Activated B cell treated with CpG ODN at 0.5 μM for 24 hours (primary cell): ENCODE measurements at regions of chr13 and their contacts with region 1.

Region 1: DNA sequence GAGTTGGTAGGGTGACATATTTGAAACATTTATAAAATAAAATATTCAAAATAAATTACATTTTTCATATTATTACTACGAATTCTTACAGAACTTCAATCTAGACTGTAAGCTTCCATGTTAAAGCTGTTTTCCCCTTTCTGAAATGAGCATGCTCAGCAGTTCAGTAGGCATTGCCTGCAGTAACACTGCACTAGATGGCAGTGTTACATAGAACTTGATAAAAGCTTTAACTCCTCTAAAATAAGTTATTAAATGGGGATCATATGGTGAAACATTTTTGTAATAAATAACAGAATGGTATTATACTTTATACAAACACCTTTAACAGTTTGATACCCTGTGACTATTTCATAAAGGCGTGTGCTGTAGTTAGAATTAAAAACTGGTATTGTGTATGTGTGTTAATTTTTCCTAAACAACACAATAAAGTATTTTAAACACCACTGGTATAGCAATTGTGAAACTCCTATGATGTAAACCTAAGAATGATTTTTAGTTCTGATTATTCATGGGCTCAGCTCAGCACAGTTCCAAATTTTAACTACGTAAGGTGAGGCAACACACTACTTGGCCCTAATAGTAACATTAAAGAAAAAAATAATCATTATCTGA is 11.6 kb upstream of the GPR18 start:
- DNase-seq: no peak
- ATAC-seq: peak; percentile 70
- H3K4me3 Mint-ChIP-seq: no peak overlapping the region
- H3K27ac Mint-ChIP-seq: peak overlapping the region; percentile 74
- H3K4me1 Mint-ChIP-seq: peaks cover 65% of the 10 kb centered on the region
- H3K27me3 Mint-ChIP-seq: no peaks in the 10 kb centered on the region
- CTCF ChIP-seq: peak; percentile 48

Region 2: GRCh38 chr13:99182439-99182838 is 87.3 kb before region 1 on chr13:
- CTCF ChIA-PET with region 1: interaction called, 370 read pairs
- POLR2A ChIA-PET with region 1: interaction called, 19 read pairs
- intact Hi-C with region 1: no loop called
- DNase-seq: no peak
- ATAC-seq: no peak
- H3K4me3 Mint-ChIP-seq: no peak overlapping the region
- H3K27ac Mint-ChIP-seq: no peak overlapping the region
- H3K4me1 Mint-ChIP-seq: peaks cover 35% of the 10 kb centered on the region
- H3K27me3 Mint-ChIP-seq: no peaks in the 10 kb centered on the region
- CTCF ChIP-seq: no peak

Region 3: GRCh38 chr13:99288089-99288488 is 18.4 kb after region 1 on chr13:
- CTCF ChIA-PET with region 1: interaction called, 37 read pairs
- POLR2A ChIA-PET with region 1: interaction called, 31 read pairs
- intact Hi-C with region 1: no loop called
- DNase-seq: no peak
- ATAC-seq: peak; percentile 85
- H3K4me3 Mint-ChIP-seq: peak overlapping the region; percentile 60
- H3K27ac Mint-ChIP-seq: peak overlapping the region; percentile 86
- H3K4me1 Mint-ChIP-seq: peaks cover 89% of the 10 kb centered on the region
- H3K27me3 Mint-ChIP-seq: no peaks in the 10 kb centered on the region
- CTCF ChIP-seq: no peak

Region 4: DNA sequence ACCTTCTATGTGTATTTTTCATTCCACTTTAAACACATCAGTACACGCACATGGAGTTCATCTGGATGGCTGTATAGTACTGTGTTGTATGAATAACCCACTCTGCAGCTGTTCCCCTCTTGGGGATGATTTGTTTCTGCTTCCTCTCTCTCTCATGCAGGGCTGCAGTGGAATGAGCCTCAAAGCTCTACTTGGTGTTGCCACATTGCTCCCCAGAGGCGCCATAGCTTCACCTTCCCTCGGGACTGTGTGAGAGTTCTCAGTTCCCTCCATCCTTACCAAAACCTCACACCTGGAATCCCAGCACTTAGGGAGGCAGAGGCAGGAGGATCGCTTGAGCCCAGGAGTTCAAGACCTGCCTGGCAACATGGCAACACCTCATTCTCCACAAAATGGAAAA is 65.9 kb after region 1 on chr13:
- CTCF ChIA-PET with region 1: interaction called, 14 read pairs
- POLR2A ChIA-PET with region 1: interaction called, 6 read pairs
- intact Hi-C with region 1: no loop called
- DNase-seq: peak; percentile 40
- ATAC-seq: peak; percentile 94
- H3K4me3 Mint-ChIP-seq: peak overlapping the region; percentile 29
- H3K27ac Mint-ChIP-seq: peak overlapping the region; percentile 77
- H3K4me1 Mint-ChIP-seq: peaks cover 56% of the 10 kb centered on the region
- H3K27me3 Mint-ChIP-seq: no peaks in the 10 kb centered on the region
- CTCF ChIP-seq: no peak

Region 5: DNA sequence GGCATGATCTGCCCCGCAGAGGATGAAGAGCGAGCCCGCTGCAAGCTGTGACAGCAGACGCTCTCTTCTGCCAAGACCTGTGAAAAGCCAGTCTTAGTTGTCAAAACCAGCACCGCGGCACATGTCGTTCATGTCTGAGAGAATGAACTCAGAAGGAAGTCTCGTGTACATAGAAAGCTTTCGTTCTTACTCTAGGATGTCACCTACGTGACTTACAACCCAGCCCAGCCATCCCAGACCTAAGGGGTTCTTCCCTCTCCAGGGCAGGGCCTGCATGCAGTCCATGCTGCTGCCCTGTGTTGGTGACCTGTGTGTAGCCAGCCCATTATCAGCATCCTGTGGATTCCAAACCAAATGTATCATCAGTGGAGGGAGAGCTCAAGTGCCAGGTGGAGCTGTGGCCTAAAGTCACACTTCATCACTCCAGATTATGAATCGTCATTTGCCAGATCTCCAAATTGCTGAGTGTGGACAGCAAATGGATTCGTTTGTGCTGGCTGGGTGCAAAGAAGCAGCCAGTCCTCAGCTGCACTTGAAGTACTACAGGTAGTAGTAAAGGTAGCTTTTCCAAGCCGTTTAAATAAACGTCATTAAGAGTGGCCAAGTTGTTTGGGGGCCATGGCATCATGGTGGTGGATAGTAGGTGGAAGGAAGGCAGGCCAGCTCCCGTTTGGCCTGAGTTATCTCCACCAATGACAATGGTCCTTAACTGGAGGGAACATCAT is 111.3 kb after region 1 on chr13:
- CTCF ChIA-PET with region 1: interaction called, 217 read pairs
- POLR2A ChIA-PET with region 1: interaction called, 44 read pairs
- intact Hi-C with region 1: no loop called
- DNase-seq: no peak
- ATAC-seq: peak; percentile 25
- H3K4me3 Mint-ChIP-seq: peak overlapping the region; percentile 25
- H3K27ac Mint-ChIP-seq: peak overlapping the region; percentile 63
- H3K4me1 Mint-ChIP-seq: peaks cover 81% of the 10 kb centered on the region
- H3K27me3 Mint-ChIP-seq: no peaks in the 10 kb centered on the region
- CTCF ChIP-seq: no peak

Region 6: DNA sequence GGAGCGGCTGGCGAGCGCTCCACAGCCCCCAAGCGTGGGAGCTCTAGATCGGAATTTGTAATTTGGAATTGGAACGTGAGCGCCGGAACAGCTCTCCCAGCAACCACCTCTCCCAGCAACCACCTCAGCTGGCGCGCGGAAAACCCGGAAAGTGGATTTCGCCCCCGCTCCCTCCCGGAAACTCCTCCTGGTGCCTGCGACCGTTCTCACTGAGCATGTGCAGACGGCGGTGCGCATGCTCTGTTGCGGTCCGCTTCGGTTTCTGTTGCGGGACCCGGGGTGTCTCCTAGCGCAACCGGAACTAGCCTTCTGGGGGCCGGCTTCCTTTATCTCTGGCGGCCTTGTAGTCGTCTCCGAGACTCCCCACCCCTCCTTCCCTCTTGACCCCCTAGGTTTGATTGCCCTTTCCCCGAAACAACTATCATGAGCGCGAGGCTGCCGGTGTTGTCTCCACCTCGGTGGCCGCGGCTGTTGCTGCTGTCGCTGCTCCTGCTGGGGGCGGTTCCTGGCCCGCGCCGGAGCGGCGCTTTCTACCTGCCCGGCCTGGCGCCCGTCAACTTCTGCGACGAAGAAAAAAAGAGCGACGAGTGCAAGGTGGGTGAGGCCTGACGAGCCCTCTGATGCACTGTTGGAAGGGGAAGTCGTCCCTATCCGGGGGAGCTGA is 231.6 kb after region 1 on chr13 and contains the start of gene TM9SF2:
- CTCF ChIA-PET with region 1: interaction called, 10 read pairs
- POLR2A ChIA-PET with region 1: no interaction called
- intact Hi-C with region 1: loop called (anchors 2 kb)
- DNase-seq: peak; percentile 98
- ATAC-seq: peak; percentile 61
- H3K4me3 Mint-ChIP-seq: peak within 1 kb of the TSS; percentile 97
- H3K27ac Mint-ChIP-seq: peak within 1 kb of the TSS; percentile 97
- H3K4me1 Mint-ChIP-seq: peaks cover 84% of the 10 kb centered on the region
- H3K27me3 Mint-ChIP-seq: no peaks in the 10 kb centered on the region
- CTCF ChIP-seq: no peak
- total RNA-seq, gene TM9SF2: 68.1 and 76.0 TPM in 2 replicates